HEK293 (cell line): ENCODE measurements at regions of chr2 and their contacts with region 1.

Region 1: DNA sequence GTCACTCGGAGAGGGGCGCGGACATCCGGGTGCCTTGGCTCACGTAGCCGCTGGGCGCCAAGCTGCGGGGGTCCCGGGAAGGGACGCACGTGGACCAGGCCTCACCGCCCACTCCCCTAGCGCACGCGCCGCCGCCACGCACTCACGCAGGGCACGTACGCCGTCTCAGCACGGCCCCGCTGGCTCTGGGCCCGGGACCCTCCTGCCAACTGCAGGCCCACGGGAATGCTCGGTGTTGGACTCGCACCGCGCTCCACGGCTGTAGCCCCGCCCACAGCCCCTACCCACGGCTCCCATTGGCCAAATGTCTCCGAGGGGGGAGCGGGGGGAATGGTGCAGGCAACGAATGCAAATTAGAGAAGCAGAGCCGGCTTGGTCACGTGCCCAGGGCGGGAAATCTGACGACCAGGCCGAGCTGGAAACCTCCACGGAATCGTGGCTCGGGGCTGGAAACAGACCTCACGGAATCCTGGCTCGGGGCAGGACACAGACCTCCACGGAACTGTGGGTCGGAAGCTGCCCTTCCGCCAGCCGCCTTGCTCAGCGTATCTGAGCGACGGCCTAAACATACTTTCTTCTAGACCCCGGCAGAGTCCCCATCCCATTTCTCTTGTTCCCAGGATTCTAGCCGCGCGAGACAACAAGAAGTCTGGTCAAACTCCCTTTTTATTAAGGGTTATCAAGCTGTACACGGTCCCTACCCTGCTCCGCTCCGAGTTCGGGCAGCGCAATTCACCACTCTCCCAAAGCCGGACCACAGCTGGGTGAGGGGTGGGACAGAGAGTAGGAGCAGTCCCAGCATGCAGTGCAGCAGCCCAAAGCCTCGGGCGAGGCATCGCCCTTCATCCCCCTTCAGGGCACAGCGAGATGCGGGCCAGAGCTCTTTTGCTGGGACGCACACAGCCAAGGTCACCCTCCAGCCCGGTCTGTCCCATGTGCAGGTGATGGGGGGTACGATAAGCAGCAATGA is at the start of gene ABCB6:
- H3K4me3 ChIP-seq: peak within 1 kb of the TSS; percentile 27
- H3K27ac ChIP-seq: peak within 1 kb of the TSS; percentile 80
- H3K4me1 ChIP-seq: no peaks in the 10 kb centered on the region
- CTCF ChIP-seq: no peak

Region 2: DNA sequence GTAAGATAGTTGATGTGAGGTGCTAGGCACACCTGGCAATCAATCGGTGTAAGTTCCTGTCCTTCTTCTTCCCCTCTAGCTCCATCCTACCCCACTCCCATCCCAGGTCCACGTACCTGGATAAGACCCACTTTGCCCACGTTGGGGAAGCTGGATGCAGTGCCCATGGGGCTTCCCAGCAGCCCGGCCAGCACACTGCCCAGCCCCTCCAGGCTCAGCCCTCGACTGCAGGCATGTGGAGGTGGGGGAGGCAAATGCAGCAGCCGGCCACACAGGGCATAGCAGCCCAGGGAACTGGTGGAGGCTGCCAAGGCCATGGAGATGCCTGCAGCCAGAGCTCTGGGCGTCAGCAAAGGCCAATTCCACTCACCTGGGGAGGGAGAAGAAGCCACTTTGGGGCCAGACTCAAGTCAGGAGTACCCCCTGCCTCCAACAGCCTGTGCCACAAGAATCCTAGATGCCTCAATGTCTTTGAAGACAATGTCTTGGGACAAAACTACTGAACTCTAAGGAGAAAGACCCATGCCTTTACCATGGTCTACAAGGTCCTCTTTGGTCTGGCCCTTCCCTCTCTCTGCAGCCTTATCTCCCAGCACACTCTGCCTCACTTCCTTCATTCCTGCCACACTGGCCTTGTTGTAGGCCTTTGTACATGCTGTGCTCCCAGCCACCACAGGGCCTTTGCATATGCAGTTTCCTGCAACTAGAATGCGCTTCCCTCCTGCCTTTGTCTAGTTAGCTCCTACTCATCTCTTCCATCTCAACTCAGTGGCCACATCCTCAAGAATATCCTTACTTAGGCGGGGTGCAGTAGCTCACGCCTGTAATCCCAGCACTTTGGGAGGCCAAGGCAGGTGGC is 53.7 kb before region 1 on chr2:
- CTCF ChIA-PET with region 1: no interaction called
- POLR2A ChIA-PET with region 1: no interaction called
- H3K4me3 ChIP-seq: no peak overlapping the region
- H3K27ac ChIP-seq: no peak overlapping the region
- H3K4me1 ChIP-seq: peaks cover 3% of the 10 kb centered on the region; the same call in 1 of the 2 replicates
- CTCF ChIP-seq: no peak

Region 3: GRCh38 chr2:219229305-219230058 is 10.5 kb after region 1 on chr2 and contains the starts of genes ANKZF1 and ATG9A:
- CTCF ChIA-PET with region 1: interaction called, 3 read pairs
- POLR2A ChIA-PET with region 1: interaction called, 16 read pairs
- H3K4me3 ChIP-seq: peak within 1 kb of the TSS; percentile 83
- H3K27ac ChIP-seq: peak within 1 kb of the TSS; percentile 81
- H3K4me1 ChIP-seq: peaks cover 4% of the 10 kb centered on the region; the same call in 1 of the 2 replicates
- CTCF ChIP-seq: no peak

Region 4: GRCh38 chr2:219418155-219418569 is 199.1 kb after region 1 on chr2 and contains the start of gene DES:
- CTCF ChIA-PET with region 1: no interaction called
- POLR2A ChIA-PET with region 1: no interaction called
- H3K4me3 ChIP-seq: no peak within 1 kb of the TSS
- H3K27ac ChIP-seq: no peak within 1 kb of the TSS
- H3K4me1 ChIP-seq: no peaks in the 10 kb centered on the region
- CTCF ChIP-seq: no peak